WTC11 (cell line): ENCODE measurements at regions of chr6 and their contacts with region 1.

Region 1: DNA sequence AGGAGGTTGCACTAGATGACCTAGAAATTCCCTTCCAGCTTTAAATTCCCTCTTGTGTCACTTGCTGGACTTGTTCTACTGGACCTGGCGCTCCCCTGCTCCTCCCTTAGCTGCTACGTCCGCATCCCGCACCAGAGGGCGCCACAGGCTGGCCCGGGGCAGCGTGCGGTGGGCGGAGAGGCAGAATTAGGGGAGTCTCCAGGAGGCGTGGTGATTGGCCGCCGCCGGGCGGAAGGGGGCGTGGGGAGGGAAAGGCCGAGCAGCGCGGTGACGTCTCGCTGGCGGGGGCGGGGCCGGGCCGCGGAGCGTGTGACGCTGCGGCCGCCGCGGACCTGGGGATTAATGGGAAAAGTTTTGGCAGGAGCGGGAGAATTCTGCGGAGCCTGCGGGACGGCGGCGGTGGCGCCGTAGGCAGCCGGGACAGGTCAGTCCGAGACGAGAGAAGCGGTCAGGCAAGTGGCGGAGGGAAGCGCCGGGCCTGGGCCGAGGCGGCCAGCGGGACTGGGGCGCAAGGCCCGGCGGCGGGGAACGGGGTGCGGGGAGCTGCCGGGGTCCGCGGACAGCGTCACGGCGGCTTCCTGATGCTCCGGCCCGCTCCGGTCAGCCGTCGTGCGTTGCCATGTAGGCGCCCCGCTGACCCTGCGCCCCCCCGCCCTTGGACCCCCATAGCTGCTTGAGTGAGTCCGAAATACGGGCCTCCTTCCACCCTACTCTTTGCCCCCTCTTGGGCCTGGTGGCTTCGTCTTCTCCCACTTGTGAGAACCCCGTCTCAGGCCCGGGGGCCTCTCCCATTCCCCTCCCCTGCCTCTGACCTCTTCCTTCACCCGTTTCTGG is at the start of gene PPARD:
- DNase-seq: peak; percentile 99
- ATAC-seq: peak; percentile 97
- H3K4me3 Mint-ChIP-seq: peak within 1 kb of the TSS; percentile 86
- H3K27ac Mint-ChIP-seq: peak within 1 kb of the TSS; percentile 87
- H3K4me1 Mint-ChIP-seq: peaks cover 20% of the 10 kb centered on the region
- H3K27me3 Mint-ChIP-seq: peaks cover 8% of the 10 kb centered on the region
- CTCF ChIP-seq: peak; percentile 93
- total RNA-seq, gene PPARD: 14.7 to 17.1 TPM (median 16.8 TPM) in 3 replicates

Region 2: GRCh38 chr6:35181933-35182612 is 160.4 kb before region 1 on chr6:
- CTCF ChIA-PET with region 1: no interaction called
- POLR2A ChIA-PET with region 1: no interaction called
- DNase-seq: peak; percentile 49
- ATAC-seq: peak; percentile 41
- H3K4me3 Mint-ChIP-seq: no peak overlapping the region
- H3K27ac Mint-ChIP-seq: no peak overlapping the region
- H3K4me1 Mint-ChIP-seq: peaks cover 7% of the 10 kb centered on the region; the same call in 1 of the 2 replicates
- H3K27me3 Mint-ChIP-seq: peaks cover 11% of the 10 kb centered on the region
- CTCF ChIP-seq: no peak

Region 3: GRCh38 chr6:35318196-35319171 is 24.0 kb before region 1 on chr6:
- CTCF ChIA-PET with region 1: interaction called, 23 read pairs
- POLR2A ChIA-PET with region 1: no interaction called
- DNase-seq: peak; percentile 96
- ATAC-seq: peak; percentile 99
- H3K4me3 Mint-ChIP-seq: peak overlapping the region; percentile 86
- H3K27ac Mint-ChIP-seq: peak overlapping the region; percentile 27; the same call in 1 of the 2 replicates
- H3K4me1 Mint-ChIP-seq: peaks cover 21% of the 10 kb centered on the region
- H3K27me3 Mint-ChIP-seq: peaks cover 25% of the 10 kb centered on the region
- CTCF ChIP-seq: no peak

Region 4: DNA sequence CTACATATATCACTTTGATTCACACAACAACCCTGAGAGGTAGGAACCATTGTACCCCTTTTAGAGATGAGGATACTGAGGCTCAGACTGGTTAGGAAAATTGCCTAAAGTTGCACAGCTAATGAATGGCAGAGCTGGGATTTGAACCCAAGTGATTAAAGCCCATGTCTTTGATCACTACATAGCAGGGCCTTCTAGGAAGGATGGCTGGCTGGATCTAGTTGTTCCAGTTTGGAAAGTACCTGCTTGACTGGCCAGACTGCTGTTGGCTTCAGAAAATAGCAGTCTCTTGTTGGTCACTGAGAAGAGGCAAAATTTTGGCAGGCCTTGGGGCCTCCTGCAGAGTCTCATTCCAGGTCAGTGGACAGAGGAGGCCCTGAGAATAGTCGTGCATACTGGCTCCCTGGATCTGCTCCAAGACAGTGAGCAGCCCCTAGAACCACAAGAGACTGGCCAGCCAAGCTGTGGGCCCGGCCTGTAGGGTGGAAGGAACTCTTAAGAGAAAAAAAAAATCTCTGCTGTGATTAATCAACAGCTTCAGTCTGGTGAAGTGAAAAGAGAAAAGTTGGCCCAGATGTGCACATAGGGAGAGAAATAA is 17.4 kb after region 1 on chr6:
- CTCF ChIA-PET with region 1: interaction called, 15 read pairs
- POLR2A ChIA-PET with region 1: no interaction called
- DNase-seq: no peak
- ATAC-seq: no peak; the same call in 1 of the 2 replicates
- H3K4me3 Mint-ChIP-seq: 0 out of 2 replicates have a peak overlapping the region, but pooled peaks have one; percentile 17
- H3K27ac Mint-ChIP-seq: peak overlapping the region; percentile 64
- H3K4me1 Mint-ChIP-seq: peaks cover 36% of the 10 kb centered on the region
- H3K27me3 Mint-ChIP-seq: no peaks in the 10 kb centered on the region
- CTCF ChIP-seq: no peak

Region 5: GRCh38 chr6:35435074-35435837 is 92.8 kb after region 1 on chr6:
- CTCF ChIA-PET with region 1: interaction called, 13 read pairs
- POLR2A ChIA-PET with region 1: no interaction called
- DNase-seq: no peak
- ATAC-seq: no peak
- H3K4me3 Mint-ChIP-seq: no peak overlapping the region
- H3K27ac Mint-ChIP-seq: no peak overlapping the region; the same call in 1 of the 2 replicates
- H3K4me1 Mint-ChIP-seq: peaks cover 3% of the 10 kb centered on the region; the same call in 1 of the 2 replicates
- H3K27me3 Mint-ChIP-seq: no peaks in the 10 kb centered on the region
- CTCF ChIP-seq: no peak

Region 6: DNA sequence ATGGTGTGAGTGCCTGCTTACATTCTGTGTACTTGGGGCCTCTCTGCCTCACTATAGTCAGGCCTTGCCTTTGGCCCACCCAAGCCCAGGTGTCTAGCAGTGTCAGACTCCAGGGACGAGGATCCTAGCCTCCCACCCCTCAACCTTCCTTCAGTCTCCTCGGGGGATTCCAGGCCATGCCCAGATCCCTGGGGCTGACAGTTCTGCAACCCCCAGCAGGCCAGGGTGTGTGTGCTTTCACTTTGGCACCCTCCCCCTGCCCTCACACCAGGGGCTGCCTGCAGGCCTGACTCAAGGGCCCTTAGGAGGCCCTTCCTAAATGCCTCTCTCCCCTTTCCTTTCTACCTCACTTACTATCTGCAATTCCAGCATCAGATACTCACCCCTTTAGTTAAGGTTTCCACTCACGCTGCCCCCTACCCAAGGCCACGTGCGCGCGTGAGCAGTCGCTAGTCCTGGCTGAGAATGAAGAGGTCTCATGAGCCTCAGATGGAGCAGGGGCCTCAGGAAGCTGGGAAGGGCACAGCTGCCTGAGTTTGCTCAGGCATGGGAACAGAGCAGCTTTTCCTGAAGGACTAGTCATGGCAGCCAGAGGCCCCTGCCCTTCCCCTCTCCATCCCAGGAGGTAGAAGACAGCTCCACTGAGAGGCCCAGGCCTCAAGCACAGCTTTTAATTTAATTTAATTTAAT is 455.5 kb after region 1 on chr6:
- CTCF ChIA-PET with region 1: no interaction called
- POLR2A ChIA-PET with region 1: interaction called, 10 read pairs
- DNase-seq: no peak
- ATAC-seq: peak; percentile 59
- H3K4me3 Mint-ChIP-seq: no peak overlapping the region
- H3K27ac Mint-ChIP-seq: 0 out of 2 replicates have a peak overlapping the region, but pooled peaks have one; percentile 90
- H3K4me1 Mint-ChIP-seq: peaks cover 26% of the 10 kb centered on the region
- H3K27me3 Mint-ChIP-seq: peaks cover 4% of the 10 kb centered on the region
- CTCF ChIP-seq: no peak